Activated CD8-positive, alpha-beta memory T cell treated with anti-CD3 and anti-CD28 coated beads, Interleukin-2, amount 10 ng/mL, durations not matched to agents 7 days and 5 days (primary cell): ENCODE measurements at regions of chr5 and their contacts with region 1.

Region 1: GRCh38 chr5:52799983-52800393 is 12.3 kb downstream of the ITGA1 start:
- DNase-seq: peak; percentile 97
- ATAC-seq: peak; percentile 85
- H3K4me3 Mint-ChIP-seq: peak overlapping the region; percentile 95
- H3K27ac Mint-ChIP-seq: peak overlapping the region; percentile 93
- H3K4me1 Mint-ChIP-seq: peaks cover 48% of the 10 kb centered on the region
- H3K27me3 Mint-ChIP-seq: no peaks in the 10 kb centered on the region

Region 2: DNA sequence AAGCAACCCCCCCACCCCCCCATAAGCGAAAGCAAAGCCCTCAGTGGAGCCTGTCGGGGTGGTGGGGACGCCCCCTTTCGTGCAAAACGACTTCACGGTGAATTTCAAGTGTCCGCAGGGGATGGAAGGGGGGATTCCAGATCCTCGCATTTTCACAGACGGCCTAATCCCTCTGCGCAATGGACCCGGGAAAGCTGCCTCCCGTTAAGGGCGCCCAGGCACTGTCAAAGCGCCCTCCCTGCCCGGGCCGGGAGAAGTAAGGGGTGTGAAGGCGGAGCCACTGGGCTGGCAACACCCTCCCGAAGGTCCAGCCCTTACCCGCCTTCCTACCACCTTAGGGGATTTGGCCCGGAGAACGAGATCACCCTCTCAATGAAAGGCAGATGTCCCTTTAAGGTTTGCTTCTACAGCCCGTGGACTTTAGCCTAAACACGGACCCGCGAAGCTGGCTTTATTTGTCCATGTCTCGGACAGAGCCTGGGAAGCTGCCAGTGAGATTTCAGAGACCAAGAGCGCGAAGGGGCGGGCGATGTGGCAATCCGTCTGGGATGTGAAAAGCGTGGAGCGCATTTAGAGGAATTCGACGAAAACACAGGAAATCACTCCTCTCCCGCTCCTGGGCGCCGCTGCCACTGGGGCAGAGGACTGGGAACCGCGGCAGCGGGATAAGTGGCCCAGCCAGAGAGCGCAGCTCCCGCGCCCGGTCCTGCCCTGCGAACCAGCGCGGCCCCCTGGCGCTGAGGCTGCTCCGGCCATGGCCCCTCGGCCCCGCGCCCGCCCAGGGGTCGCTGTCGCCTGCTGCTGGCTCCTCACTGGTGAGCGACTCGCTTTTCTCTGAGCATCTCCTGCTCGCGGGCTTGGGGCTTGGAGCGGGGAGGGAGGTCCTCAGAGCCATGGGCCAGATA is 12.1 kb before region 1 on chr5 and contains the starts of genes ITGA1 and PELO:
- CTCF ChIA-PET with region 1: interaction called, 34 read pairs
- DNase-seq: peak; percentile 70
- ATAC-seq: peak; percentile 93
- H3K4me3 Mint-ChIP-seq: peak within 1 kb of the TSS; percentile 92
- H3K27ac Mint-ChIP-seq: peak within 1 kb of the TSS; percentile 84
- H3K4me1 Mint-ChIP-seq: peaks cover 52% of the 10 kb centered on the region
- H3K27me3 Mint-ChIP-seq: peaks cover 2% of the 10 kb centered on the region
- total RNA-seq, gene ITGA1: 37.0 to 66.8 TPM
- total RNA-seq, gene PELO: 41.8 to 63.4 TPM

Region 3: GRCh38 chr5:52811067-52811749 is 11.2 kb after region 1 on chr5:
- CTCF ChIA-PET with region 1: interaction called, 12 read pairs
- DNase-seq: no peak
- ATAC-seq: peak; percentile 48
- H3K4me3 Mint-ChIP-seq: no peak overlapping the region
- H3K27ac Mint-ChIP-seq: no peak overlapping the region
- H3K4me1 Mint-ChIP-seq: peaks cover 34% of the 10 kb centered on the region
- H3K27me3 Mint-ChIP-seq: no peaks in the 10 kb centered on the region